MCF 10A (cell line): ENCODE measurements at regions of chr4 and their contacts with region 1.

Region 1: DNA sequence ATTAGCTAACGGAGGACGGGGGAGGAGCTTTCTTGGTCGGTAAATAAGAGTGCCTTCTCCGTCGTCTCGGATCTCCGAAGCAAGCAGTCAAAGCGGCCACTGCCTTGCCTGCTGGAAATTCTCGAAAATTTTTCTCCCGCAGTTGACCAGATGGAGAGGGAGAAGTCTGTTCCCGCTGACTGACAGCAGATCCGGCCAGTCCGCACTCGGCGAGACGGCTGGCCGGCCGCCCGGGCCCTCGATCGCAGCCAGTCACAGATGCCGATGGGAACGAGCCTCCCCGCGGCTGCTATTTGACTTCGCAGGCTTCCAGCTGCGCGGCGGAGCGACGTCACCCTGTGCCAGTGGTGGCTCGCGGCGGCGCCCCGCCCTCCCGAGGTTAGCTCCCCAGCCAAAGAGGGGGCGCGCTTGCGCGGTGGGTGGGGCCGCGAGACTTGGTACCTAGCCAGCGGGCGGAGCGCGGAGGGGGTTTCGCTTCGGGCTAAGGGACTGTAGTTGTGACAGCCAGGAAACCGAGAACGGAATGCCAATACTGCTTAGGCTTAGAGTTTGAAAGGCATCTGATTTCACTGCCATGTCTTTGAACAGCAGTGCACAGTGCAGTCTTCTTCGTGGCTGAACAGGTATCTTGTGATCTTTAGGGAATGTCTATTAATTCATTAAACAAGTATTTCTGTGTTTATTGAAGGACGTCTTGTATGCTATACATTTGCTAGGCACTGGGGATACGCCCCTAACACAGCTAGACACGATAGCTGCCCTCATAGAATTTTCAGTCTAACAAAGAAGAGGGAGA is at the start of gene PPM1K:
- DNase-seq: peak; percentile 97
- H3K4me3 Mint-ChIP-seq: peak within 1 kb of the TSS; percentile 94
- H3K27ac Mint-ChIP-seq: peak within 1 kb of the TSS; percentile 94
- H3K4me1 Mint-ChIP-seq: peaks cover 17% of the 10 kb centered on the region
- H3K27me3 Mint-ChIP-seq: no peaks in the 10 kb centered on the region
- CTCF ChIP-seq: no peak
- total RNA-seq, gene PPM1K: 19.5 and 21.0 TPM in 2 replicates

Region 2: GRCh38 chr4:88217920-88218319 is 66.7 kb before region 1 on chr4:
- CTCF ChIA-PET with region 1: no interaction called
- POLR2A ChIA-PET with region 1: interaction called, 4 read pairs
- intact Hi-C with region 1: loop called (anchors 2 kb)
- DNase-seq: no peak
- H3K4me3 Mint-ChIP-seq: no peak overlapping the region
- H3K27ac Mint-ChIP-seq: no peak overlapping the region
- H3K4me1 Mint-ChIP-seq: no peaks in the 10 kb centered on the region
- H3K27me3 Mint-ChIP-seq: peaks cover 19% of the 10 kb centered on the region
- CTCF ChIP-seq: no peak

Region 3: GRCh38 chr4:88240297-88240714 is 44.3 kb before region 1 on chr4:
- CTCF ChIA-PET with region 1: no interaction called
- POLR2A ChIA-PET with region 1: no interaction called
- intact Hi-C with region 1: no loop called
- DNase-seq: no peak
- H3K4me3 Mint-ChIP-seq: no peak overlapping the region
- H3K27ac Mint-ChIP-seq: no peak overlapping the region
- H3K4me1 Mint-ChIP-seq: no peaks in the 10 kb centered on the region
- H3K27me3 Mint-ChIP-seq: no peaks in the 10 kb centered on the region
- CTCF ChIP-seq: no peak

Region 4: GRCh38 chr4:88320780-88321373 is 36.2 kb after region 1 on chr4:
- CTCF ChIA-PET with region 1: interaction called, 4 read pairs
- POLR2A ChIA-PET with region 1: interaction called, 11 read pairs
- intact Hi-C with region 1: no loop called
- DNase-seq: no peak
- H3K4me3 Mint-ChIP-seq: no peak overlapping the region
- H3K27ac Mint-ChIP-seq: no peak overlapping the region
- H3K4me1 Mint-ChIP-seq: peaks cover 6% of the 10 kb centered on the region
- H3K27me3 Mint-ChIP-seq: no peaks in the 10 kb centered on the region
- CTCF ChIP-seq: no peak

Region 5: GRCh38 chr4:88352062-88352740 is 67.6 kb after region 1 on chr4:
- CTCF ChIA-PET with region 1: interaction called, 4 read pairs
- POLR2A ChIA-PET with region 1: interaction called, 26 read pairs
- intact Hi-C with region 1: no loop called
- DNase-seq: peak; percentile 46
- H3K4me3 Mint-ChIP-seq: no peak overlapping the region
- H3K27ac Mint-ChIP-seq: peak overlapping the region; percentile 37
- H3K4me1 Mint-ChIP-seq: peaks cover 9% of the 10 kb centered on the region
- H3K27me3 Mint-ChIP-seq: no peaks in the 10 kb centered on the region
- CTCF ChIP-seq: no peak

Region 6: DNA sequence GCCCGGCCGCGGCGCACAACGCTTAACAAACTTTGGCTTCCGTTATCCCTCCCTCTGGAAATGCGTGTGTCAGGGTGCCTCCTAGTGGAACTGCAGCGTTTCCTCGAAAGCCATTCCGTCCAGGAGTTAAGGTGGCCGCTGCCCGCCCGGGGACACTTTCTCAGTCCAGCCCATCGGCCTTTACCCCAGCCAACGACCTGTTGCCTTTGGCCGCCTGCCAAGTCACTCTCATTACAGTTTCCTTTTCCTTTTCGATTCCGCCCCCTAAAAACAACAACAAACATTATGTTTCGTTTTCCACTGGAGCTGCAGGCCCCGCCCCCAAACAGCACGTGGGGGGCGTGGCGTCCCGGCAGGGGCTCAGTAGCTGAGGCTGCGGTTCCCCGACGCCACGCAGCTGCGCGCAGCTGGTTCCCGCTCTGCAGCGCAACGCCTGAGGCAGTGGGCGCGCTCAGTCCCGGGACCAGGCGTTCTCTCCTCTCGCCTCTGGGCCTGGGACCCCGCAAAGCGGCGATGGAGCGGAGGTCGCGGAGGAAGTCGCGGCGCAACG is 172.2 kb after region 1 on chr4 and contains the start of gene HERC5:
- CTCF ChIA-PET with region 1: interaction called, 3 read pairs
- POLR2A ChIA-PET with region 1: interaction called, 6 read pairs
- intact Hi-C with region 1: loop called (anchors 5 kb)
- DNase-seq: peak; percentile 95
- H3K4me3 Mint-ChIP-seq: peak within 1 kb of the TSS; percentile 95
- H3K27ac Mint-ChIP-seq: peak within 1 kb of the TSS; percentile 57
- H3K4me1 Mint-ChIP-seq: no peaks in the 10 kb centered on the region
- H3K27me3 Mint-ChIP-seq: no peaks in the 10 kb centered on the region
- CTCF ChIP-seq: peak; percentile 62
- total RNA-seq, gene HERC5: 0.54 and 0.63 TPM in 2 replicates

Region 7: DNA sequence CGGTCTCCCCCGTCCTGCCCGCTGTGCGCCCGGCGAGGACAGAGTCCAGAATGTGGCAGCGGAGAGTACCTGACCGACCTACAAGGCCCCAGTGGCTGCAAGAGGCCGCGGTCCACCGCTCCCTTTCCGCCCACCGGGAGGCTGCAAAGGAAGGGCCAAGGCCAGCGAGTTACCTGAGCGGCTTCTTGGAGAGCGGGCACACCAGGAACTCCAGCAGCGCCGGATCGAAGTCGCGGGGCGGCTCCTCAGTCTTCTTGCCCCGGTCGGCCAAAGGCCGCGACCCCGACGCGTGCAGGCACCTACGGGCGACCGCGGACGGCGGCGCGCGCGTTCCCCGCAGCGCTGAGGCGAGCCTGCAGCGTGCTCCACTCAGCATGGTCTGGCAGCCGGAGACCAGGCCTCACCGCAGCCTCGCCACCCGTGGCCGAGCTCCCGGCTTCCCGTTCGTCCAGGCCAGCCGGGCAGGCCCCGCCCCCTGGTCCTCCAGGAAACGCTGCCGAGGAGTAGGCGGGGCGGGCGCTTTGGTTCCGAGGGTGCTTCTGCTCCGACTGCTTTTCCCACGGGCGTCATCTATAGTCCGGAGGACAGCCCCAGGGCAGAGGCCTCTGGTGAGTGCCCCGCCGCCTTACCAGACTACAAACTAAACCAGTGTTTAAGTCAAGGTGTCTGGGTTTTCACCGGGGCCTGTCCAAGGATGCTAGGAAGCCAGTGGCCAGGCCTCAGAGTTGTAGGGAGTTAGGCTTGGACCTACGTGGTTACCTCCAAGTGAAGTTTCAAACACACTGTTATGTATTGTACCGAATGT is 238.9 kb after region 1 on chr4 and contains the start of gene PYURF:
- CTCF ChIA-PET with region 1: interaction called, 7 read pairs
- POLR2A ChIA-PET with region 1: interaction called, 47 read pairs
- intact Hi-C with region 1: loop called (anchors 5 kb)
- DNase-seq: peak; percentile 93
- H3K4me3 Mint-ChIP-seq: peak within 1 kb of the TSS; percentile 97
- H3K27ac Mint-ChIP-seq: peak within 1 kb of the TSS; percentile 89
- H3K4me1 Mint-ChIP-seq: peaks cover 14% of the 10 kb centered on the region
- H3K27me3 Mint-ChIP-seq: no peaks in the 10 kb centered on the region
- CTCF ChIP-seq: no peak
- total RNA-seq, gene PYURF: 80.9 and 82.5 TPM in 2 replicates